GM12878 (cell line): ENCODE measurements at regions of chr10 and their contacts with region 1.

Region 1: DNA sequence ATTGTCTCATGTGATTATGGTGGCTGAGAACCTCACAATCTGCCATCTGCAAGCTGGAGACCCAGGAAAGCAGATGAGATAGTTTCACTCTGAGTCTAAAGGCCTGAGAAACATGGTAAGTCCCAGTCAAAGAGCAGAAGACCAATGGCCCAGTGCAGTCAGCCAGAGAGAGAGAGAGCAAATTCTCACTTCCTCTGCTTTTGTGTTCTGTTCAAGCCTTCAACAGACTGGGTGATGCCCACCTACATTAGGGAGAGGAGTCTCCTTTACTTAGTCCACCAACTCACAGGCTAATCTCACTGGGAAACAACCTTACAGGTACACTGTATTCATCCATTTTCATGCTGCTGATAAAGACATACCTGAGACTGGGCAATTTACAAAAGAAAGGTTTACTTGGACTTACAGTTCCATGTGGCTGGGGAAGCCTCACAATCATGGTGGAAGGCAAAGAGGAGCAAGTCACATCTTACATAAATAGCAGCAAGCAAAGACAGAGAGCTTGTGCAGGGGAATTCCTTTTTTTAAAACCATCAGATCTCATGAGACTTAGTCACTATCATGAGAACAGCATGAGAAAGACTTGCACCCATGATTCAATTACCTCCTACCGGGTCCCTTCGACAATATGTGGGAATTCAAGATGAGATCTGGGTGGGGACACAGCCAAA is 4.7 kb upstream of the FRMPD2 start:
- DNase-seq: peak; percentile 99
- ATAC-seq: peak; percentile 88
- H3K4me3 ChIP-seq: no peak overlapping the region
- H3K27ac ChIP-seq: peak overlapping the region; percentile 96
- H3K4me1 ChIP-seq: peaks cover 44% of the 10 kb centered on the region
- H3K27me3 ChIP-seq: no peaks in the 10 kb centered on the region
- CTCF ChIP-seq: no peak
- EP300 ChIP-seq: peak; percentile 67 to 89; a peak in 3 of 4 replicates
- POLR2A ChIP-seq: peak; percentile 54
- RAD21 ChIP-seq: 0 out of 2 replicates have a peak, but pooled peaks have one; percentile 0

Region 2: DNA sequence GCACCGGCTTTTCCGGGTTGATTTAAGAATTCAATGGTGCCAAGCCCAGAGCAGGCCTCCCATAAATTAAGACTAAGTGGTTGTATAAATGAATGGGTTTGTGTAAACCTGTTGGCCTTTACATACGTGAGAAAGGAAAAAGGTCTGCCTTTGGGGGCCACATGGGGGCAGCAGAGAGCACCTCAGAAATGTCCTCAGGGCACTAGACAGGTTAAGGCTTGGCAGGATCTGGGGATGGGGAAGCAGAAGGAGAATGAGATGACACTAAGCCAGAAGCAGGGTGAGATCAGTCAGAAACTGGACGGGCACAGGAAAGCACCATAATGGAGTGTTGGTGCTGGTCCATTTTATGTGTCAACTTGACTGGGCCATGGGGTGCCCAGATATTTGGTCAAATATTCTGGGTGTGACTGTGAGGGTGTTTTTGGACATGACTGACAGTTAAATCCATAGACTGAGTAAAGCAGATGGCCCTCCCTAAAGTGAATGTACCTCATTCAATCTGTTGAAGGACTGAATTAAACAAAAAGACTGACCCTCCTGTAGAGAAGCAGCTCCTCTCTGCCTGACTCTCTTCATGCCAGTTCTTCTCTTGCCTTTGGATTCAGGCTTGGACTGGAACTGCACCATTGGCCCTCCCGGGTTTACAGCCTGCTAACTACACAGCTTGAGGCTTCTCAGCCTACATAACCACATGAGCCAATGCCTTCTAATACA is 63.6 kb before region 1 on chr10:
- CTCF ChIA-PET with region 1: interaction called, 12 read pairs
- POLR2A ChIA-PET with region 1: interaction called, 5 read pairs
- RAD21 ChIA-PET with region 1: interaction called, 4 read pairs
- SMC1A ChIA-PET with region 1: interaction called, 14 read pairs
- in situ Hi-C with region 1: no loop called
- intact Hi-C with region 1: no loop called
- DNase-seq: peak; percentile 49
- ATAC-seq: peak; percentile 94
- H3K4me3 ChIP-seq: no peak overlapping the region
- H3K27ac ChIP-seq: no peak overlapping the region
- H3K4me1 ChIP-seq: no peaks in the 10 kb centered on the region
- H3K27me3 ChIP-seq: no peaks in the 10 kb centered on the region
- CTCF ChIP-seq: peak; percentile 50 to 81 (median 78)
- EP300 ChIP-seq: no peak
- POLR2A ChIP-seq: no peak
- RAD21 ChIP-seq: peak; percentile 83

Region 3: DNA sequence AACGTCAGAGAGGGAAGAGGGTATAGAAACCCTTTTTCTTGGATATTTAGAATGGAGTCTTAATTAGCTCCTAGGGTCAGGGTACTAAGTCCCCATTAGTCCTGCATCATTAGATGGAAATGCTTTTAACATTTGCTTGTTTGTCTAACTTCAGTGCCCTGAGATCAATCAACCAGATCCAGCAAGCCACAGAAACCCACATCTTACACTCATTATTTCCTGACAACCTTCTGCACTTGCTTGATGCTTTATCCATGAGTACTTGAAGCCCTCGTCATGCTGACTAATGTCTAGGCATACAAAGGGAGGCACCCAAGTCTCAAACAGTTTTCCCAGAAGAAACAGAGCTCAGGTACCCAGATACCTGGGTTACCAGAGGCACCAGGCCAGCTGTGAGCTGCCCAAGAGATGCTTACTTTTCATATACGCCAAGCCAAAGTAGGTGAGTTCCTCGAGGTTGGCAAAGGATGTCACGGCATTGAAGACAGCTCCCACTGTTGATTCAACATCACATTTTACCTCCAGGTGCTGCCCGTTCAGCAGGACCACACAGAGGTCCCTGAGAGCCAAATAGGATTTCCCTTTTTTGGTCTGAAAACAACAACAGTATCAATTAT is 47.4 kb before region 1 on chr10:
- CTCF ChIA-PET with region 1: no interaction called
- POLR2A ChIA-PET with region 1: interaction called, 9 read pairs
- RAD21 ChIA-PET with region 1: interaction called, 13 read pairs
- SMC1A ChIA-PET with region 1: no interaction called
- in situ Hi-C with region 1: no loop called
- intact Hi-C with region 1: loop called (anchors 2 kb)
- DNase-seq: peak; percentile 64
- ATAC-seq: peak; percentile 89
- H3K4me3 ChIP-seq: 0 out of 2 replicates have a peak overlapping the region, but pooled peaks have one; percentile 25
- H3K27ac ChIP-seq: no peak overlapping the region
- H3K4me1 ChIP-seq: peaks cover 16% of the 10 kb centered on the region
- H3K27me3 ChIP-seq: no peaks in the 10 kb centered on the region
- CTCF ChIP-seq: no peak
- EP300 ChIP-seq: peak in 1 of 2 experiments; percentile 25; a peak in 1 of 4 replicates
- POLR2A ChIP-seq: no peak
- RAD21 ChIP-seq: no peak

Region 4: DNA sequence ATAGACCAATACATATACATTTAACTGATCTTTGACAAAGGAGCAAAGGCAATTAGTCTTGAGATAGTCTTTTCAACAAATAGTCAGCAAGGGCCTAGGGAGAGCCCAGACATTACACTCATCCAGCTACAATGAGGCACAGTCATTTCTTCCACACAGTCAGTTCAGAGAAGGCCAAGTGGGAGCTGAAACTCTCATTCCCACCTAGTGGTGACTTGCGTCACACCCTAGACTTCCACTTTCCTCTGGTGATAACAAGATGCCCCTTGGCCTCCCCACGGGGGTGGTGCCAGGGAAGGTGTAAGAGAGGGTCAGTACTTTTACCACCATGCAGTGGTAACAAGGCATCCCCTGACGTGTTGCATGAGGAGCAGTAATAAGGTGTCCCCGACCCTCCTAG is 12.7 kb before region 1 on chr10:
- CTCF ChIA-PET with region 1: interaction called, 4 read pairs
- POLR2A ChIA-PET with region 1: interaction called, 5 read pairs
- RAD21 ChIA-PET with region 1: interaction called, 4 read pairs
- SMC1A ChIA-PET with region 1: interaction called, 7 read pairs
- in situ Hi-C with region 1: no loop called
- intact Hi-C with region 1: loop called (anchors 1 kb)
- DNase-seq: no peak
- ATAC-seq: peak; percentile 91
- H3K4me3 ChIP-seq: no peak overlapping the region
- H3K27ac ChIP-seq: no peak overlapping the region
- H3K4me1 ChIP-seq: no peaks in the 10 kb centered on the region
- H3K27me3 ChIP-seq: no peaks in the 10 kb centered on the region
- CTCF ChIP-seq: 0 out of 6 replicates have a peak, but pooled peaks of 1 of the 3 experiments have one; percentile 7
- EP300 ChIP-seq: no peak
- POLR2A ChIP-seq: no peak
- RAD21 ChIP-seq: no peak

Region 5: DNA sequence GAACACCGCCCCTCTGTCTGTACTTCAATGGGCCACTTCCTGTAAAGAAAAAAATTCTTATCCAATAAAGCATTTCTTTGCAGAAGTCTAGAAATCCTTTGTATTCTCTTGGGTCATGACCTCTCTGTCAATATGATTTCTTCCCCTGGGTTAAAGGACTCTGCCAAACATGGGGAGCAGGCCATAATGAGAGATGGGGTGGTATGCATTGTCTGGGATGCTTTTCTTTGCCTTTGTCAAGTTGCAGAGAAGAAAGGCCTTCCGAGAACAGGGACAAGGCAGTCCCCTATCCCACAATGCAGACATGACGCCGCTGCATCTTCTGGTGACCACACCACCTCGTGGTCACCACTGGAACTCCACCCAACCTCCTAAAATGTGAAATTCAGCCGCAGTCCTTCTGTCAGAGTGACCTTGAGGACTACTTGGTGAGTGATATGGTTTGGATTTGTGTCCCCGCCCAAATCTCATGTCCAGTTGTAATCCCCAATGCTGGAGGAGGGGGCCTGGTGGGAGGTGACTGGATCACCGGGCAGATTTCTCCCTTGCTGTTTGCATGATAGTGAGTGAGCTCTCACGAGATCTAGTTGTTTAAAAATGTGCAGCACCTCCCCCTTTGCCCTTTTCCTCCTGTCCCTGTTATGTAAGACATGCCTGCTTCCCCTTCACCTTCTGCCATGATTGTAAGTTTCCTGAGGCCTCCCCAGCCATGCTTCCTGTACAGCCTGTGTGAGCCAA is 10.5 kb after region 1 on chr10:
- CTCF ChIA-PET with region 1: interaction called, 45 read pairs
- POLR2A ChIA-PET with region 1: interaction called, 43 read pairs
- RAD21 ChIA-PET with region 1: interaction called, 34 read pairs
- SMC1A ChIA-PET with region 1: interaction called, 87 read pairs
- in situ Hi-C with region 1: no loop called
- intact Hi-C with region 1: no loop called
- DNase-seq: no peak
- ATAC-seq: peak; percentile 60
- H3K4me3 ChIP-seq: no peak overlapping the region
- H3K27ac ChIP-seq: no peak overlapping the region
- H3K4me1 ChIP-seq: peaks cover 34% of the 10 kb centered on the region
- H3K27me3 ChIP-seq: no peaks in the 10 kb centered on the region
- CTCF ChIP-seq: peak; percentile 80 to 91 (median 86)
- EP300 ChIP-seq: no peak
- POLR2A ChIP-seq: no peak
- RAD21 ChIP-seq: peak; percentile 86

Region 6: DNA sequence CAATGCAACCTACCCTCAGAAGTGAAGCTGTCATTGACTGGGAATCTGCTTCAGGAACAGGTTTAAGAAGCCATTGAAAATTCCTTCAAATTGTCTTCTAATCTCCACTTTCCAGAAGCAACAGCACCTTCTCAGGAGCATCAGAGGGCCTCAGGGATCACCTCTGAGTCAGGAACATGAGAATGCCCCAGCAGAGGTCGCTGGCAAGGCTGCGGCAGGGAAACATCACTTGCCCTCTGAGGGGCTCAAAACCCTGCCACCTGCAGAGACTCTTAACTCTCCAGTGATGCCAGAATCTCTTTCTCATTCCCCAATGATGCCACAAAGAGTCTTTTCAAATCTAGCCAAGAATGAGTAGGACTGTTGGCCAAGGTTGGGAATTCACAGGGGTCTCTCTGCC is 21.3 kb after region 1 on chr10:
- CTCF ChIA-PET with region 1: interaction called, 8 read pairs
- POLR2A ChIA-PET with region 1: interaction called, 3 read pairs
- RAD21 ChIA-PET with region 1: interaction called, 16 read pairs
- SMC1A ChIA-PET with region 1: interaction called, 5 read pairs
- in situ Hi-C with region 1: no loop called
- intact Hi-C with region 1: no loop called
- DNase-seq: no peak
- ATAC-seq: no peak
- H3K4me3 ChIP-seq: no peak overlapping the region
- H3K27ac ChIP-seq: no peak overlapping the region
- H3K4me1 ChIP-seq: peaks cover 8% of the 10 kb centered on the region; the same call in 1 of the 2 replicates
- H3K27me3 ChIP-seq: no peaks in the 10 kb centered on the region
- CTCF ChIP-seq: no peak
- EP300 ChIP-seq: no peak
- POLR2A ChIP-seq: no peak
- RAD21 ChIP-seq: no peak

Region 7: GRCh38 chr10:48336978-48337599 is 57.9 kb after region 1 on chr10:
- CTCF ChIA-PET with region 1: no interaction called
- POLR2A ChIA-PET with region 1: no interaction called
- RAD21 ChIA-PET with region 1: no interaction called
- SMC1A ChIA-PET with region 1: interaction called, 4 read pairs
- in situ Hi-C with region 1: no loop called
- intact Hi-C with region 1: loop called (anchors 2 kb)
- DNase-seq: peak; percentile 85
- ATAC-seq: peak; percentile 92
- H3K4me3 ChIP-seq: peak overlapping the region; percentile 26; the same call in 1 of the 2 replicates
- H3K27ac ChIP-seq: peak overlapping the region; percentile 67
- H3K4me1 ChIP-seq: peaks cover 21% of the 10 kb centered on the region
- H3K27me3 ChIP-seq: no peaks in the 10 kb centered on the region
- CTCF ChIP-seq: no peak
- EP300 ChIP-seq: peak; percentile 99; a peak in 3 of 4 replicates
- POLR2A ChIP-seq: no peak
- RAD21 ChIP-seq: no peak